ENCODE measurements at regions of chr2 and their contacts with region 1.

Region 1: DNA sequence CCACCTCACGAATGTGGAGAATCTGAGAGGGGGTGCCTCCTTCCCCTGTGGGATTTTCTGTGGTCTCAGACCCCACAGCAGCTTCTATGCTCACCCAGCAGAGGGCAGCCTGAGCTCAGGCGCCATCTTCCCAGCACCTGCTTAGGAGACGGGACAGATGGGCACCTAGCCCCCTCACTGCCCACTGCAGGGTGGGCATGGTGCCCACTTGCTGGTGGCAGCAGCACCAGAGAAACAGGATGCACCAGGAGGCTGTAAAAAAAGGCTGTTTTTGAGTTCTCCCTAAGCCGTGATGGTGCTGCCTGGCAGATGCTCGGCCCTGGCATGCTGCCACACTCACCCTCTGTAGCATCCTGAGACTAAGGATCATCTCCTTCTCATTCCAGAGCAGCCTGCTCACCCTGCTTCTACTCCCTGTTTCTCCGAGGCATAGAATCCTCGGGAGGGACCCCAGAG is 19.1 kb upstream of the SLC20A1 start:
- DNase-seq: peak in 1 of 2 donors; percentile 42
- ATAC-seq: peak; percentile 51 to 58
- H3K4me3 ChIP-seq: peak overlapping the region in 2 of 4 donors; percentile 5 to 18
- H3K27ac ChIP-seq: peak overlapping the region; percentile 47 to 67 (median 61)
- H3K4me1 ChIP-seq: peaks cover 6 to 12% of the 10 kb centered on the region in 2 donors
- H3K27me3 ChIP-seq: peaks cover 4 to 9% (median 9%) of the 10 kb centered on the region in 3 donors
- CTCF ChIP-seq: peak; percentile 66 to 85 (median 80)
- POLR2A ChIP-seq: no peak

Region 2: GRCh38 chr2:112584134-112584890 is 42.3 kb before region 1 on chr2 and contains the start of gene CHCHD5:
- in situ Hi-C with region 1: no loop called
- intact Hi-C with region 1: no loop called
- DNase-seq: peak; percentile 93 to 95
- ATAC-seq: peak; percentile 84
- H3K4me3 ChIP-seq: peak within 1 kb of the TSS; percentile 70 to 86 (median 76)
- H3K27ac ChIP-seq: peak within 1 kb of the TSS; percentile 93 to 99 (median 96)
- H3K4me1 ChIP-seq: peaks cover 39 to 40% of the 10 kb centered on the region in 2 donors
- H3K27me3 ChIP-seq: no peaks in the 10 kb centered on the region
- CTCF ChIP-seq: peak in 3 of 5 experiments; percentile 6 to 24 (median 21)
- POLR2A ChIP-seq: peak; percentile 72 to 78
- total RNA-seq, gene CHCHD5: 13.2 to 26.6 (median 24.1) TPM

Region 3: GRCh38 chr2:112685271-112685884 is 58.7 kb after region 1 on chr2:
- in situ Hi-C with region 1: loop called in 1 of 4 experiments (anchors 10 kb)
- intact Hi-C with region 1: no loop called
- DNase-seq: no peak
- ATAC-seq: no peak
- H3K4me3 ChIP-seq: no peak overlapping the region
- H3K27ac ChIP-seq: no peak overlapping the region
- H3K4me1 ChIP-seq: peaks cover 6 to 16% of the 10 kb centered on the region in 2 donors
- H3K27me3 ChIP-seq: no peaks in the 10 kb centered on the region
- CTCF ChIP-seq: peak in 1 of 5 experiments; percentile 16
- POLR2A ChIP-seq: no peak

Region 4: DNA sequence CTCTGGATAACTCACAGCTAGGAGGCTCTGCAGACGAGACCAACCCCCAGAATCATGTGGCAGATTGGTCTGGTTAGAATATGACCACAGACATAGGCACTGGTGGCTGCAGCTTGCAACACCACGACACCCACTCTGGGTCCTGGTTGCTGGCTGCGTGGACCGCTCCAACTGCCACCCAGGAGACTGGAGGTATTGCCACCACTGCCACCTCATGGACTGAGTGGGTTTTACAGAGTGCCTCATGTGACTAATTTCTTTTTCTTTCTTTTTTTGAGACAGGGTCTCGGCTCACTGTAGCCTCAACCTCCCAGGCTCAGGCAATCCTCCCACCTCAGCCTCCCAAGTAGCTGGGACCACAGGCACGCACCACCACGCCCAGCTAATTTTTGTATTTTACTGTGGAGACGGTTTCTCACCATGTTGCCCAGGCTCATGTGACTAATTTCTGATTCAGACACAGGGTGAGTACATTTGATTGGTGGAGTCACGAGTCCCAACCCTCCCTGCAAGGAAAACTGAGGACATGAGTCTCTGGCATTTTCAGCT is 64.3 kb after region 1 on chr2:
- in situ Hi-C with region 1: loop called in 1 of 4 experiments (anchors 10 kb)
- intact Hi-C with region 1: loop called (anchors 1 kb)
- DNase-seq: peak; percentile 44 to 56
- ATAC-seq: peak; percentile 84 to 89
- H3K4me3 ChIP-seq: peak overlapping the region in 1 of 4 donors; percentile 42
- H3K27ac ChIP-seq: peak overlapping the region in 1 of 4 donors; percentile 30
- H3K4me1 ChIP-seq: no peaks in the 10 kb centered on the region
- H3K27me3 ChIP-seq: no peaks in the 10 kb centered on the region
- CTCF ChIP-seq: peak; percentile 59 to 79 (median 73)
- POLR2A ChIP-seq: no peak

Region 5: GRCh38 chr2:112726497-112727190 is 100.0 kb after region 1 on chr2:
- in situ Hi-C with region 1: loop called in 2 of 4 experiments (anchors 10 kb)
- intact Hi-C with region 1: loop called (anchors 1 kb)
- DNase-seq: peak; percentile 70 to 80
- ATAC-seq: peak; percentile 89 to 97
- H3K4me3 ChIP-seq: no peak overlapping the region
- H3K27ac ChIP-seq: no peak overlapping the region
- H3K4me1 ChIP-seq: no peaks in the 10 kb centered on the region
- H3K27me3 ChIP-seq: no peaks in the 10 kb centered on the region
- CTCF ChIP-seq: peak; percentile 83 to 93 (median 92)
- POLR2A ChIP-seq: no peak

Region 6: DNA sequence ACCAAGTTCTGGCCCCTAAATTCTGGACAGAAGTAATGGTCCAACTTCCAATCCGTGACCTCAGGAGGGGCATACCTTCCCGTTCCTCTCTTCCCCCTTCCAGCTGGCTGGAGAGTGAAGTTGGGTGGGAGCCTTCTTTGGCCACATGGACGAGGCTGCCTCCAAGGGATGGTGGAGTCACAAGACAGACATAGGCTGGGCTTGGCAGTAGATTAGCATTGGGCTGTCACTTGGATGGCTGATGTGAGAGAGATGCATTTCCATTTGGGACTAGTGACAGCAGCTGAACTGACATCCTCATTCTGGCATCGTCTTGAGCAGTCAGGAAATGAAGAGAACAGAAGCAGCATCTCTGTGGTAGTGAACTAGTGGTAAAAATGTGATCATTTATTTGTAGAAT is 106.8 kb after region 1 on chr2:
- in situ Hi-C with region 1: loop called in 2 of 4 experiments (anchors 10 kb)
- intact Hi-C with region 1: no loop called
- DNase-seq: no peak
- ATAC-seq: no peak
- H3K4me3 ChIP-seq: no peak overlapping the region
- H3K27ac ChIP-seq: no peak overlapping the region
- H3K4me1 ChIP-seq: no peaks in the 10 kb centered on the region
- H3K27me3 ChIP-seq: no peaks in the 10 kb centered on the region
- CTCF ChIP-seq: no peak
- POLR2A ChIP-seq: no peak

Region 7: DNA sequence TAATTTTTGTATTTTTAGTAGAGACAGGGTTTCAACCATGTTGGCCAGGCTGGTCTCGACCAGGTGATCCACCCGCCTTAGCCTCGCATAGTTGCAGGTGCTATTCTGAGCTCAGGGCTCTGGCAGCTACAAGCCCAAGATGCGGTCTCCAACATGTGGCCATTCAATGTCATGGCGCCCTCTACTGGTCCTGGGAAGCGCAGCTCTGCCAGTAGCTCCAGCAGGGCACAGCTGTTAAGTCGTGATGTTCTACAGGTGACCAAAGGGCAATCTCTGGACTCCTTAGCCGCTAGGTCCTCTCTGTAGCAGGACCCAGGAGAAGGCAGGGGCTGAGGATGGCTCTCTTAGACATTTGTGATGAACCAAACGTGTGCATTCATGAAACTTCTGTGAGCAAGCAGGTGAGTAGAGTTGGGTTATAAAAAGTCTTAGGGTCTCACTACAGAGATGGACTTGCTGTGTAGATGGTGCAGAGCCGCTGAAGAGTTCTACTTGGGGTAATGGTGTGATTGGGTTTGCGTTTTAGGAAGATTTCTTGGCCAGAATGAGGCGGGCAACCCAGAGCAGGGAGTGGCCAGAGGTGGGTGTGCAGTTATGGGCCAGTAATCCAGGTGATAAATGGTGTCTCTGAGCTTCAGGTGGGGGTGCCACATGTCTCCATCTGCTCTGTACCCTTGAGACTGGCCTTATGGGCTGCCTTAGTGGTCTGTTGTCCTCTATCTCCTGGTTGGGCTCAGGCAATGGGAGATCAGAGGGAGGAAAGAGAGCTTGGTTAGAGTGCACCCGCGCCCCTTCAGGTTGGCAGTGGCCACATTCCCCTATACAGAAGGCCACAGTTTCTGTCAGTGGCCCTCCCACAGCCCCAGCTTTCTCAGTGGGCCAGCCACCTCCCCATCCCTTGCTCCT is 315.4 kb after region 1 on chr2:
- in situ Hi-C with region 1: loop called in 1 of 4 experiments (anchors 25 kb)
- intact Hi-C with region 1: no loop called
- DNase-seq: no peak
- ATAC-seq: no peak
- H3K4me3 ChIP-seq: no peak overlapping the region
- H3K27ac ChIP-seq: no peak overlapping the region
- H3K4me1 ChIP-seq: no peaks in the 10 kb centered on the region
- H3K27me3 ChIP-seq: no peaks in the 10 kb centered on the region
- CTCF ChIP-seq: peak in 2 of 5 experiments; percentile 39 to 55
- POLR2A ChIP-seq: no peak

Measured in gastrocnemius medialis (tissue), 4 donors.